ENCODE measurements at regions of chr5 and their contacts with region 1.

Region 1: GRCh38 chr5:168987543-168988300 is 313.2 kb downstream of the SLIT3 start:
- DNase-seq: peak; percentile 87
- H3K4me3 Mint-ChIP-seq: no peak overlapping the region
- H3K27ac Mint-ChIP-seq: no peak overlapping the region
- H3K4me1 Mint-ChIP-seq: no peaks in the 10 kb centered on the region
- H3K27me3 Mint-ChIP-seq: peaks cover 22% of the 10 kb centered on the region
- CTCF ChIP-seq: peak; percentile 93

Region 2: DNA sequence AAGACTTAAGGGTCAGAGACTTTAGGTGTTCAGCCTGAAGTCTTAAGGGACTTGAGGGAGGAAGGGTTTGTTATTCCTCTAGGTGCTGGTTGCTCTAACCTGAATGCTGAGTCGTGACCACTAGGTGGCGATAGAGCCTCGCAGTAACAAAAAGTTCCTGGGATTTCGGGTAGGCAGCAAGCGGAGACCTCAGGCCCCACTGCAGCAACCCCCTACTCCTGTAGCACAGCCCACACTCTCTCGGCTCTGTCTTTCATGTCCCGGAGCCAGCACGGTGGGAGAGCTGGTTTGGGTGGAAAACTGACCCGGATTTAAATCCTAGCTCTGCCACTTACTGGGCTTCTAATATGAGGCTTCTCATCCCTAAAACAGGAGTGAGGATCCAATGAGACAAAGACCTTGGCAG is 308.2 kb before region 1 on chr5:
- CTCF ChIA-PET with region 1: interaction called, 17 read pairs
- POLR2A ChIA-PET with region 1: no interaction called
- intact Hi-C with region 1: loop called (anchors 1 kb)
- DNase-seq: peak; percentile 84
- H3K4me3 Mint-ChIP-seq: no peak overlapping the region
- H3K27ac Mint-ChIP-seq: no peak overlapping the region
- H3K4me1 Mint-ChIP-seq: no peaks in the 10 kb centered on the region
- H3K27me3 Mint-ChIP-seq: no peaks in the 10 kb centered on the region
- CTCF ChIP-seq: peak; percentile 96

Region 3: GRCh38 chr5:168770036-168770498 is 217.7 kb before region 1 on chr5:
- CTCF ChIA-PET with region 1: no interaction called
- POLR2A ChIA-PET with region 1: no interaction called
- intact Hi-C with region 1: no loop called
- DNase-seq: no peak
- H3K4me3 Mint-ChIP-seq: no peak overlapping the region
- H3K27ac Mint-ChIP-seq: no peak overlapping the region
- H3K4me1 Mint-ChIP-seq: no peaks in the 10 kb centered on the region
- H3K27me3 Mint-ChIP-seq: no peaks in the 10 kb centered on the region
- CTCF ChIP-seq: no peak

Region 4: GRCh38 chr5:168941901-168942300 is 45.8 kb before region 1 on chr5:
- CTCF ChIA-PET with region 1: interaction called, 17 read pairs
- POLR2A ChIA-PET with region 1: no interaction called
- intact Hi-C with region 1: no loop called
- DNase-seq: no peak
- H3K4me3 Mint-ChIP-seq: no peak overlapping the region
- H3K27ac Mint-ChIP-seq: no peak overlapping the region
- H3K4me1 Mint-ChIP-seq: no peaks in the 10 kb centered on the region
- H3K27me3 Mint-ChIP-seq: no peaks in the 10 kb centered on the region
- CTCF ChIP-seq: no peak

Region 5: DNA sequence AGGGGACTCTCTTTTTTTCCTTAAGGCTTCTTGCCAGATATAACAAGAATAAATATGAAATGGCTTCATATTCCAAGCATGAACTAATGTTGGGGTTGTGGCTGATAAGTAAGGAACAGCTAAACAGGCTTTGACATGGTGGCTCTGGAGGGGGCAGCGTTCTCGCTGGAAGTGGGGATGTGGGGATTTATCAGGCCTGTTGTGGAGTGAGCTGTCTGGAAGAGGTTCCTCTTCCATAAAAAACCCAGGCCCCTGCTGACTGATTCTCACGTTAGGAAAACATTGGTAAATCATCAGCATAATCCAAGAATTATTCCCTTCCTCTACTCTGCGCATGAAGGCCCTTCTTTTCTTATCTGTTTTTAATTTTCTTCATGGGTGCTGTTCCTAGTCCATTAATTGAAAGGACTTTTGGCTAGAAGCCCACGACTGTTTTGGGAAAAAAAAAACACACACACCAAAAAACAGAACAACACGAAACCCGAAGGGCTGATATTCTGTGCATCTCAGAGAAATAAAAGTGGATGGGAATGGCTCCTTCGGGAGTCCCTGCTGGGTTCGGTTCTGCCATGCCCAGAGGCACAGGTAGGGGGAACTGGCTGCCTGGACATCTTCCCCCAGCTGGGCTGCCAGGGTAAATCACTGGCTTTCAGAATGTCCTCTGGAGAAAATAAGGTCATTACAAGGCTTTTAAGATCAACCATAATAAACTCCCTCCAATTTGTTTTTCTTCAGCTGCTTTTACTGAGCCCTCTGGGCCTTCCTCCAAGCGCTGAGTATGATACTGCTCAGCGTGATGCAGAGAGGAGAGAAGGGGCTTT is 16.2 kb after region 1 on chr5:
- CTCF ChIA-PET with region 1: interaction called, 34 read pairs
- POLR2A ChIA-PET with region 1: no interaction called
- intact Hi-C with region 1: no loop called
- DNase-seq: no peak
- H3K4me3 Mint-ChIP-seq: no peak overlapping the region
- H3K27ac Mint-ChIP-seq: no peak overlapping the region
- H3K4me1 Mint-ChIP-seq: peaks cover 11% of the 10 kb centered on the region
- H3K27me3 Mint-ChIP-seq: no peaks in the 10 kb centered on the region
- CTCF ChIP-seq: no peak

Region 6: GRCh38 chr5:169197343-169197742 is 209.6 kb after region 1 on chr5:
- CTCF ChIA-PET with region 1: interaction called, 39 read pairs
- POLR2A ChIA-PET with region 1: no interaction called
- intact Hi-C with region 1: no loop called
- DNase-seq: peak; percentile 65
- H3K4me3 Mint-ChIP-seq: no peak overlapping the region
- H3K27ac Mint-ChIP-seq: no peak overlapping the region
- H3K4me1 Mint-ChIP-seq: no peaks in the 10 kb centered on the region
- H3K27me3 Mint-ChIP-seq: no peaks in the 10 kb centered on the region
- CTCF ChIP-seq: no peak

Region 7: GRCh38 chr5:169538944-169539343 is 551.2 kb after region 1 on chr5:
- CTCF ChIA-PET with region 1: interaction called, 118 read pairs
- POLR2A ChIA-PET with region 1: no interaction called
- intact Hi-C with region 1: no loop called
- DNase-seq: no peak
- H3K4me3 Mint-ChIP-seq: no peak overlapping the region
- H3K27ac Mint-ChIP-seq: no peak overlapping the region
- H3K4me1 Mint-ChIP-seq: no peaks in the 10 kb centered on the region
- H3K27me3 Mint-ChIP-seq: no peaks in the 10 kb centered on the region
- CTCF ChIP-seq: no peak

Region 8: GRCh38 chr5:169753795-169754194 is 766.1 kb after region 1 on chr5:
- CTCF ChIA-PET with region 1: no interaction called
- POLR2A ChIA-PET with region 1: no interaction called
- intact Hi-C with region 1: no loop called
- DNase-seq: no peak
- H3K4me3 Mint-ChIP-seq: no peak overlapping the region
- H3K27ac Mint-ChIP-seq: no peak overlapping the region
- H3K4me1 Mint-ChIP-seq: peaks cover 6% of the 10 kb centered on the region
- H3K27me3 Mint-ChIP-seq: no peaks in the 10 kb centered on the region
- CTCF ChIP-seq: no peak